Activated CD4-positive, alpha-beta memory T cell treated with anti-CD3 and anti-CD28 coated beads for 36 hours (primary cell): ENCODE measurements at regions of chr4 and their contacts with region 1.

Region 1: GRCh38 chr4:52545099-52546069 is 113.7 kb downstream of the USP46 start:
- DNase-seq: peak; percentile 75
- H3K4me3 Mint-ChIP-seq: no peak overlapping the region
- H3K27ac Mint-ChIP-seq: no peak overlapping the region
- H3K4me1 Mint-ChIP-seq: no peaks in the 10 kb centered on the region
- H3K27me3 Mint-ChIP-seq: peaks cover 4% of the 10 kb centered on the region

Region 2: DNA sequence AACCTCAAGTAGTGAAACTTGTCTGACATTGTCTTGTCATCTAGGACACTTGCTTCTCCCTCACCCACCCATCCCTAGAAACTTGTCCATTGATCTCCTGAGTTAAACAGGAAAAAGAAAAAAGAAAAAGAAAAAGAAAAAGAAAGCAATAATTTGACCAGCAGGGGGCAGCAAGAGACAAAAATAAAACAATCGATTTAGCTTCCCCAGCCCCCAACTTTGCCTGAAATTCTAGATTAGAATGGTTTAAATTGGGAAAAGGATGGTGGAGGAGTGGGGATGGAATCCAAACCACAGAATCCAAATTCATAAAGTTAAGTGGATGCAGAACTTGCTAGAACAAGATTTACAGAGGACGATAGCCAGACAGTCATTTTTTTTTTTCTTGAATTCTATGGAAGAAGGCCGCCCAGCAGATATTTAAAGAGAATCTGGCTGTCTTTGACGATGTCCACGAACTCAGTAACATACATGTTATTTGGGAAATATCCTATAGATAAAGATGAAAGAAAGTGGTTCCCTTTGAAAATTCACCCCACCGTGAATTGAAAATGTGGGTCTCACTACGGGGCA is 169.2 kb before region 1 on chr4:
- CTCF ChIA-PET with region 1: interaction called, 5 read pairs
- POLR2A ChIA-PET with region 1: no interaction called
- intact Hi-C with region 1: loop called (anchors 2 kb)
- DNase-seq: no peak
- H3K4me3 Mint-ChIP-seq: no peak overlapping the region
- H3K27ac Mint-ChIP-seq: no peak overlapping the region
- H3K4me1 Mint-ChIP-seq: no peaks in the 10 kb centered on the region
- H3K27me3 Mint-ChIP-seq: peaks cover 6% of the 10 kb centered on the region

Region 3: DNA sequence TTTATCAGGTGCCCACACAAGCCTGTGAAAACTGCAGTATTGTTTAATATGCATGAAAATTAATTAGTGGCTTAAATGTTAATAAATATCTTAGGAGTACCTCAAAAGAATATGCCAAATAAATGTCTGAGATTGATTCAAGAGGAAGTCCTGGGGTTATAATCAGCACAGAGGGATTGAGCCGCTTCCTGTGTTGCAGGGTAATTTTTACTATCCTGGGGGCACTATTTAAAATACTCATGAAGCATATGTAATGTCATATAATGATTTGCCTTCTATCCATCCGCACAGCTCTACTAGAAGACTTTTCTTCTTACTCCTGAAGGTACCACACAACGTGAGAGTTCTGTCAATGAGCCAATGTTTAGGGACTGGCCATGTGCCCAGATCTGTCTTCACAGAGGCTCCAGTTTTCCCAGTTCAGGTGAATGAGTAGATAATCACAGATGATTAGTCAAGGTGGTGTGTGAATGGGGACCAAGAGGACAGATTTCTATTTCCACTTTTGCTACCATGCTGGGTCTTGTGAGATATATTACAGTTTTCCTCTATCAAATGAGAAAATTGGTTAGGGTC is 119.5 kb before region 1 on chr4:
- CTCF ChIA-PET with region 1: no interaction called
- POLR2A ChIA-PET with region 1: no interaction called
- intact Hi-C with region 1: no loop called
- DNase-seq: no peak
- H3K4me3 Mint-ChIP-seq: no peak overlapping the region
- H3K27ac Mint-ChIP-seq: no peak overlapping the region
- H3K4me1 Mint-ChIP-seq: no peaks in the 10 kb centered on the region
- H3K27me3 Mint-ChIP-seq: no peaks in the 10 kb centered on the region

Region 4: GRCh38 chr4:52588097-52588782 is 42.9 kb after region 1 on chr4:
- CTCF ChIA-PET with region 1: interaction called, 15 read pairs
- POLR2A ChIA-PET with region 1: no interaction called
- intact Hi-C with region 1: no loop called
- DNase-seq: peak; percentile 51
- H3K4me3 Mint-ChIP-seq: no peak overlapping the region
- H3K27ac Mint-ChIP-seq: peak overlapping the region; percentile 44
- H3K4me1 Mint-ChIP-seq: peaks cover 31% of the 10 kb centered on the region
- H3K27me3 Mint-ChIP-seq: no peaks in the 10 kb centered on the region

Region 5: GRCh38 chr4:52665592-52665991 is 120.2 kb after region 1 on chr4:
- CTCF ChIA-PET with region 1: interaction called, 18 read pairs
- POLR2A ChIA-PET with region 1: no interaction called
- intact Hi-C with region 1: loop called (anchors 2 kb)
- DNase-seq: no peak
- H3K4me3 Mint-ChIP-seq: no peak overlapping the region
- H3K27ac Mint-ChIP-seq: no peak overlapping the region
- H3K4me1 Mint-ChIP-seq: peaks cover 11% of the 10 kb centered on the region
- H3K27me3 Mint-ChIP-seq: peaks cover 8% of the 10 kb centered on the region